ENCODE measurements at regions of chr1 and their contacts with region 1.

Region 1: DNA sequence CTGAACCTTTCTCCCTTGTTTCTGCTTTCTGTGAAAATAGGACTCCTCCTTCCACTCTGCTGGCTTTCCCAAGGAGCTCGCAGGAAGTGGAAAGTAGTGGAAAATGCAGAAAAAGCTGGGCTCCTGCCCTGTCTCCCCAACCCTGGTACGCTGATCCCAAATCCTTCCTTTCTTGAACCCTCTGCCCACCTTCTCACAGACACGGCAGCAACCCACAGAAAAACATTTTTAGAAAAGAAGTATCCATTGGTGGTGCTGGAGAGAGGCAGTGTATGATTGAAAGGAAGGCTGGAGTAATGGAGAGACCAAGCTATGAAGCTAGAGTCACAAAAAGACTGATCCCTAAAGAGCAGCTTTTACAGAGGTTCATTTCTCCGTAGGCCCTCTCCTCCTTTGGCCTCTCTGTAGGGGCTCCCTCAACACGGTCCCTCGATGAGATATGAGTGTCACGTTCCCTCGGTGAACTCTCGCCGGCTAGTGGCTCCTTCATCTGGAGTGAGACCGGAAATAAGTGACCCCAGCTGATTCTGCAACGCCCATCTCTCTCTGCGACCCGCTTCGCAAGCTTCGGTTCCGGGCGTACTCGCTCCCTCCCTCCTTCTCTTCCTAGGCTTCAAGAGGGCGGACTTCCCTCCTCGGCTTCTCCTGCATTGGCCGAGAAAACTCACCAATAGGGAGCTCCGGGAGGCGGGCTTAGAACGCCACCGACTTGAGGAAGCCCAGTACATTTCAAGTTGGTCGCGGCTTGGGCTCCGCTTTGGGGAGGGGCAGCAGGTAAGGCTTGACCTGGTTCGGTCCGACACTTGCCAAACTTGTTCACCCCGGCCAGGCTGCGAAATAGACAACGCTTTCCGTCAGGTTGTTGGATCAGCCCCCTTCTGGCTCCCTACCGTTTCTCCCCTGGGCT is at the starts of genes ANKRD34A and POLR3GL:
- DNase-seq: peak; percentile 98
- H3K4me3 Mint-ChIP-seq: peak within 1 kb of the TSS; percentile 98
- H3K27ac Mint-ChIP-seq: peak within 1 kb of the TSS; percentile 93
- H3K4me1 Mint-ChIP-seq: peaks cover 37% of the 10 kb centered on the region
- H3K27me3 Mint-ChIP-seq: no peaks in the 10 kb centered on the region
- total RNA-seq, gene ANKRD34A: 4.8 and 5.2 TPM in 2 replicates
- total RNA-seq, gene POLR3GL: 12.1 and 12.6 TPM in 2 replicates

Region 2: DNA sequence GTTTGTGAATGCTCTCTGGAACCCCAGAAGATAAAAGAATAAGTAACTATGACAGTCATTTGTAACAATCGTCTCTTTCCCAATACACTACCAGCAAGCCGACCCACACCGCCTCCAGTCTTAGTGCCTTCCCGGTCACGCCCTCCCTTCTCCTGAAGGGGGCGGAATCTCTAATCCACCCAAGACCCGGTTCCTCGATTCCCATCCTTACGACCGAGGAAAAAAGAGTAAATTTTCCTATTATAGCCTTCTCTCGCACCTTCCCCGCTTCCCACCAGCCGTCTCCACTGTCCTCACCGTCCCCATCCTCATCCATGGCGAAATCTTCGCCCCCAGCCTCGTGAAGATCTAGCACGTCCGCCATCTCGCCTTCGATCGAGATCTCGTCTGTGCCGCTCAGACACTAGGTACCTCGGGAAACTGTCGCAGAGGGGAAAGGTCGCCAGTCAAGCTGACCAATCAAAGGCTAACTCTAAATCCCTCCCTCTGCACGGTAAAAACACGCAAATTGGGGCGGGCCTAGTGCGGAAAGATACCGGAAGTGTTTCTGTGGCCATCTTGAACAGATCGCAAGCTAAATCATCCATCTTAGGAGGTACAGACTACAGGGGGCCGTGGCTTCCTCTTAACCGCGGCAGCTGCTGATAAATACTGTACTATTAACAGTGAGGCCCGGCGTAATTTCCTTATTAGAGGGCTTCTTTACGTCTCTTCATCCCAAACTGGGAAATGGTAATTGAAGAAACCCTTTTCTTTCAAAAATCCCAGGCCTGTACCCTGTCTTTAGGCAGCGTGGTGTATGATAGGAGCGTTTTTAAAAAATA is 37.0 kb before region 1 on chr1 and contains the start of gene RBM8A:
- intact Hi-C with region 1: loop called (anchors 1 kb)
- DNase-seq: peak; percentile 98
- H3K4me3 Mint-ChIP-seq: no peak within 1 kb of the TSS
- H3K27ac Mint-ChIP-seq: peak within 1 kb of the TSS; percentile 86
- H3K4me1 Mint-ChIP-seq: peaks cover 15% of the 10 kb centered on the region
- H3K27me3 Mint-ChIP-seq: no peaks in the 10 kb centered on the region
- total RNA-seq, gene RBM8A: 326 and 355 TPM in 2 replicates

Region 3: GRCh38 chr1:146019231-146020057 is 55.2 kb after region 1 on chr1:
- intact Hi-C with region 1: no loop called
- DNase-seq: no peak
- H3K4me3 Mint-ChIP-seq: peak overlapping the region; percentile 35
- H3K27ac Mint-ChIP-seq: no peak overlapping the region
- H3K4me1 Mint-ChIP-seq: peaks cover 10% of the 10 kb centered on the region
- H3K27me3 Mint-ChIP-seq: peaks cover 73% of the 10 kb centered on the region

Region 4: GRCh38 chr1:146036965-146037646 is 72.9 kb after region 1 on chr1:
- intact Hi-C with region 1: loop called (anchors 2 kb)
- DNase-seq: peak; percentile 93
- H3K4me3 Mint-ChIP-seq: peak overlapping the region; percentile 96
- H3K27ac Mint-ChIP-seq: peak overlapping the region; percentile 97
- H3K4me1 Mint-ChIP-seq: peaks cover 46% of the 10 kb centered on the region
- H3K27me3 Mint-ChIP-seq: peaks cover 16% of the 10 kb centered on the region

Region 5: DNA sequence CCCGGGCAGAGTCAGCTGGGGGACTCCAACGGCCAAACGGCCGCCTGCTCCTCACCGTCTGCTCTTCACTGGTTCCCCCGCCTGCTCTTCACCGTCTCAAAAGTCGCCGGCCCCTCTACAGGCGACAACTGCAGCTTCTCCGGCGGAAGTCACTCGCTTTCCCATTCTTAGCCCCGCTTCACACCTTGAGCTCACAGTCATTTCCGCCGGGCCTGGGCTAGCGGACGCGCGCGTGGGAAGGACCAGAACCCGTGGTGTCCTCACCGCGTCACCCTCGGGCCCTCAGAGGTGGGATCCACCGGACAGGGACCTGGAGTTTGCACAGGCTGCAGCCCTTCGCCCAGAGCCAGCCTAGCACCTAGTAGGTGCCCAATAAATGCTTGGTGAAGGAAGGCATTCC is 85.2 kb after region 1 on chr1:
- intact Hi-C with region 1: loop called (anchors 5 kb)
- DNase-seq: peak; percentile 57
- H3K4me3 Mint-ChIP-seq: no peak overlapping the region
- H3K27ac Mint-ChIP-seq: no peak overlapping the region
- H3K4me1 Mint-ChIP-seq: peaks cover 21% of the 10 kb centered on the region
- H3K27me3 Mint-ChIP-seq: peaks cover 2% of the 10 kb centered on the region